ENCODE measurements at regions of chr10 and their contacts with region 1.

Region 1: DNA sequence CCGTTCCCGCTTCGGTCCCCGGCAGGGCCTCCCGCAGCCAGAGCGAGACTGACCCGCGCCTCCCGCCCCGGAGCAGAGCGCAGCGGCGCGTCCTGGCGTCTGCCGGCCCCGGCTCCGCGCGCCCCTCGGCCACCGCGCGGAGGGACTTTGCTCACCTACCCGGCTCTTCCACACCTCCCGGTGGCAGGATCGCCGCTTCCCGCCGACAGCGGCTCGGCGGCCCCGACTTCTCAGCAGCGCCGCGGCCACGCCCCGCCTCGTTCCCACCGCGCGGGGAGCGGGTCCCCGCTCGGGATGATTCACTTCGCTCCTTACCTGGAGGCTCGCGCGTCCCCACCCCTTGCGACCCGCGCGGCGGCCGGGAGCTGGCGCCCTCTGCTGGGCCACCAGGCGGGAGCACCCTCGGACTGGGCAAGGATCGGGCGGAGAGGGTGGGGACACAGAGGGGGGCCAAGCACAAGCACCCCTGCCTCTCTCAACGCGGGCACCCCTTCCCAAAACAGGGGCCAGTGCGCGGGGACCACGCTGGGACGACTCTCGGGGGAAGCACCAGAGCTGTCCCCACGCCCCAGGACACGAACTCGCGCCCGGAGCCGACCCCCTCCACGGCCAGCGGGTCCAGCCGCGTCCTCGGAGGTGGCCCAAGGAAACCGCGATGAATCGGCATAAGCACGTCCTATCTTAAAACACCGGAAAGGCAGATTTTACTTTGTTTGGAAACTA is 101.0 kb upstream of the SVIL start:
- DNase-seq: peak; percentile 83
- H3K4me3 Mint-ChIP-seq: peak overlapping the region; percentile 81
- H3K27ac Mint-ChIP-seq: no peak overlapping the region
- H3K4me1 Mint-ChIP-seq: peaks cover 19% of the 10 kb centered on the region
- H3K27me3 Mint-ChIP-seq: no peaks in the 10 kb centered on the region
- CTCF ChIP-seq: peak; percentile 85

Region 2: GRCh38 chr10:29555746-29556481 is 179.8 kb before region 1 on chr10:
- CTCF ChIA-PET with region 1: no interaction called
- POLR2A ChIA-PET with region 1: no interaction called
- intact Hi-C with region 1: no loop called
- DNase-seq: peak; percentile 65
- H3K4me3 Mint-ChIP-seq: no peak overlapping the region
- H3K27ac Mint-ChIP-seq: no peak overlapping the region
- H3K4me1 Mint-ChIP-seq: peaks cover 12% of the 10 kb centered on the region
- H3K27me3 Mint-ChIP-seq: no peaks in the 10 kb centered on the region
- CTCF ChIP-seq: no peak

Region 3: DNA sequence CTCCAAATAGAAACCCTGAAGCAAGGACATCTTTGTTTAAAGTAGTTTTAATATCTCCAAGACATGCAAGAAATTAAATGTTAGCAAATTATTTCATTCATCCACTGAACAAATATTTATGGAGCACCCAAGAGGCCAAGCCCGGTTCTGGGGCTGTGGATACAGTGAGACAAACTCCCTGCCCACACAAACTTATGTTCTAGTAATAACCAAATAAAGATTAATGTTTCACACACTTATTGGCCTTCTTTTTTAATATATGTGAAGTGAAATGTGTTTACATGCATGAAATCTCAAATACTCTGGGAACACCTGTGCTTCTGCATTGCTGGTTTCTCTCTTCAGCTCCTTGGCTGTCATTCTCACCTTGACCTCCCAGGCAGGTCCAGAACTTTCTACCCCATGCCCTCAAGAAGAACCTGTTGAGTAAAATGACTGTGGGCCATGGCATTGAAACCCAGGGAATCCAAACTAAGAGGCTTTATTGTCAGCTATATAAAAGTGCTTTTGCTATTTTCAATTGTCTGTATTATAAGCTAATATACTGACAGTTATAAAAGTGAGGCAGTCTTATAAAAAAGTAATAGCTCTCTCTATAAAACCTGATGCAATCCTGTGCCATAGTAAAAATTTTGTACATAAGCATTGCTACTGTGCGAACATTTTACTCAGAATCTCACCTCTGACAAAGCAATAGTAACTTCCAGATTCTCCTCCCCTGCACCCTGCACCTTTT is 144.7 kb before region 1 on chr10:
- CTCF ChIA-PET with region 1: interaction called, 3 read pairs
- POLR2A ChIA-PET with region 1: interaction called, 3 read pairs
- intact Hi-C with region 1: loop called (anchors 1 kb)
- DNase-seq: no peak
- H3K4me3 Mint-ChIP-seq: peak overlapping the region; percentile 15
- H3K27ac Mint-ChIP-seq: peak overlapping the region; percentile 92
- H3K4me1 Mint-ChIP-seq: peaks cover 24% of the 10 kb centered on the region
- H3K27me3 Mint-ChIP-seq: no peaks in the 10 kb centered on the region
- CTCF ChIP-seq: no peak

Region 4: DNA sequence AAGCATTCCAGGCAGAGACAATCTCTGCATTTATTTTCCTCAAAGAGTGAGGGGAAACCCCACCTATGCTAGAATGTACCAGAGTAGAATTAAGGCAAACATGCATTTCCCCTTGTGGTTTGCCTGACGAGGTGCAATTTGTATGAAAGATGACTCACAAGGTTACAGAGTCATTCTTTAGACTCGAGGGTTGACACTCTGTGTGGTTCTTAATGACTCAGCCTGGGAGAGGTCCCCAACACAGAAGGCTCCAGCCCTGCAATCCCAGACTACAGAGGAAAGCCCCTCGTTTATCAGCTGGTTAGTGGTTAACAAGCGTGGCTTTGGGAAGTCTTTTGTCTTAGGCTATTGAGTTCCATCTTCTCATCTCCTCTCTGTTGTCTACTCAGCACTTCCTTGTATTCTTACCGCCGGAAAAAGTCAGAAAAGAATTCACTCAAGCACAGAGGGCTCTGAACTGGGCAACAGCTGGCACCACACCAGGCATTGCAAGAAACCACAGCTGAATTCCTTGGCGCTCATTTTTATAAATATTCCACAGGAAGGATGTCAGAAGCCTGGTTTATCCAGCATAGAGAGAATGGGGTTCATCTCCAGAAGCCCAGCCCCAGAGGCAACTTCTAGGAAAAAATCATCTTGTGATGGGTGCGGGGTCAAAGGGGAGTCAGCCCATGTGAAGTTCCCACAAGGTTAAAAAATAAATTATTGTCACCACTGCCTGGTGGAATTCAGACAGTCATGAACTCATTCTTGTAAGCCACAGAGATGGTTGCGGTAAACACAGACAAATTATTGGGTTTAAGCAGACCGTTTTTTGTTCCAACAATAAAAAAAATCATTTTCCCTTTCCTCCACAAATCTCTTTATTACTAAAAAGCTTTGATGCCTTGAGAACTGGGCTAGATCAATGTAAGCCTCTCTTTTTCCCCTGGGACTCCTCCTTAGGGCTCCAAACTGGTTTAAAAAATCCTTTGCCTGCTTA is 76.5 kb before region 1 on chr10:
- CTCF ChIA-PET with region 1: no interaction called
- POLR2A ChIA-PET with region 1: interaction called, 4 read pairs
- intact Hi-C with region 1: loop called (anchors 2 kb)
- DNase-seq: peak; percentile 98
- H3K4me3 Mint-ChIP-seq: peak overlapping the region; percentile 15
- H3K27ac Mint-ChIP-seq: peak overlapping the region; percentile 74
- H3K4me1 Mint-ChIP-seq: peaks cover 24% of the 10 kb centered on the region
- H3K27me3 Mint-ChIP-seq: no peaks in the 10 kb centered on the region
- CTCF ChIP-seq: peak; percentile 32

Region 5: DNA sequence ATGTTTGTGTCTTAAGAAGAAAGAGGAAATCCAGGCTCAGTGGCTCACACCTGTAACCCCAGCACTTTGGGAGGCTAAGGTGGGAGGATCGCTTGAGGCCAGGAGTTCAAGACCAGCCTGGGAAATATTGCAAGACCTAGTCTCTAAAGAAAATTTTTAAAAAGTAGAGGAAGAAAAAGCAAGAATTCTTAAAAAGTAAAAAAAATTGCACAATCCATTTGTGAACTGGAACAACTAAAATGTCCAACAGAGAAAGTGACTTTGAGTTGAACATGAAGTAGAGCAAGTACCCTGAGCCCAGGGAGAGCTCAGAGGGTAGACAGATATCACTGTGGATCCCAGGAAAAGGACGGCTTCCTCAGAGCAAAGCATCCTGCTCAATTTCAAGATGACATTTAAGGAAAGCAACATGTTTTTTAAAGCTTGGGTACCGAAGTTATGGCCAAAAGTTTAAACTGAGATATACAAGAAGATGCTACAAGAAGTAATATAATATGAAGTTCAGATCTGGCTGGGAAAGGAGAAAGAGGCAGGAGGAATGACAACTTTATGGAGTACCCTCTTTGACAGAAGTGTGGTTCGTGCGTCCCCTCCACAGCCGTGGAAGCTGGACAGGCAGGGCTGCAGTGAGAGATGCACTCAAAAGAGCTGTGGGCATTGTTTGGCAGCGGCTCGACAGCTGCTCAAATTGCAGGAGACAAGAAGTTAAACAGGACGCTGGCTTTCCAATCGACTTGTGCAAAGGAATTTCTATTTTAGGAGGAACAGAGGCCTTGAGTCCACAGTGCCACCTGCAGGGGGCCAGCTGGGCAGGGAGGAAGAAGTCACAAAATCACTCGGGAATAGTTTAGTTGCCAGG is 122.3 kb after region 1 on chr10:
- CTCF ChIA-PET with region 1: interaction called, 10 read pairs
- POLR2A ChIA-PET with region 1: interaction called, 3 read pairs
- intact Hi-C with region 1: loop called (anchors 1 kb)
- DNase-seq: peak; percentile 83
- H3K4me3 Mint-ChIP-seq: no peak overlapping the region
- H3K27ac Mint-ChIP-seq: peak overlapping the region; percentile 3
- H3K4me1 Mint-ChIP-seq: peaks cover 38% of the 10 kb centered on the region
- H3K27me3 Mint-ChIP-seq: no peaks in the 10 kb centered on the region
- CTCF ChIP-seq: peak; percentile 68